CD4-positive, alpha-beta memory T cell (primary cell): ENCODE measurements at regions of chr5 and their contacts with region 1.

Region 1: GRCh38 chr5:12920527-12920926 is 1016.3 kb upstream of the CTNND2 start:
- DNase-seq: no peak
- H3K4me3 ChIP-seq: no peak overlapping the region
- H3K4me3 Mint-ChIP-seq: no peak overlapping the region
- H3K27ac ChIP-seq: no peak overlapping the region
- H3K27ac Mint-ChIP-seq: no peak overlapping the region
- H3K4me1 ChIP-seq: no peaks in the 10 kb centered on the region
- H3K4me1 Mint-ChIP-seq: no peaks in the 10 kb centered on the region
- H3K27me3 ChIP-seq: no peaks in the 10 kb centered on the region
- H3K27me3 Mint-ChIP-seq: no peaks in the 10 kb centered on the region

Region 2: DNA sequence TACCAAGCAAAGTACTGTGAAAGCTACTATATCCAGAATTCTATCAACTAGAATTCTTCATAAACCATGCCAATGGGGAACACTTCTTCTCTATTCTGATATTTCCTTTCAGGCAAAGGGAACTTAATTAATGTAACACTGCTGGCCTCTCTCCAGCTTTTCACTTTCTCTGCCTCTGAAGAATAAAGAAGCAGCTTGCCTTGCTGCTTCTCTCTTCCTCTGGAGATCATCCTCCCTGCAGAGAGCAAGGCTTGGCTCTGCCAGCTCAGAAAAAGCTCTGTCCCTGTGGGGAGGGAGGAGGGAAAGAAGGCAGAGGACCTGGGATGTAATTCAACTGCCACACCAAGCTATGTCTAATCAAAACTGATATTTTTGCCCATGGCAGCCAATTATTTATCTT is 1022.7 kb before region 1 on chr5:
- CTCF ChIA-PET with region 1: no interaction called
- POLR2A ChIA-PET with region 1: no interaction called
- intact Hi-C with region 1: no loop called
- DNase-seq: no peak
- H3K4me3 ChIP-seq: no peak overlapping the region
- H3K4me3 Mint-ChIP-seq: no peak overlapping the region
- H3K27ac ChIP-seq: no peak overlapping the region
- H3K27ac Mint-ChIP-seq: no peak overlapping the region
- H3K4me1 ChIP-seq: no peaks in the 10 kb centered on the region
- H3K4me1 Mint-ChIP-seq: peaks cover 0 to under 1% (median under 1%) of the 10 kb centered on the region in 4 donors
- H3K27me3 ChIP-seq: no peaks in the 10 kb centered on the region
- H3K27me3 Mint-ChIP-seq: peaks cover 7 to 12% of the 10 kb centered on the region in 2 donors

Region 3: GRCh38 chr5:12488161-12488560 is 432.4 kb before region 1 on chr5:
- CTCF ChIA-PET with region 1: no interaction called
- POLR2A ChIA-PET with region 1: no interaction called
- intact Hi-C with region 1: no loop called
- DNase-seq: no peak
- H3K4me3 ChIP-seq: no peak overlapping the region
- H3K4me3 Mint-ChIP-seq: no peak overlapping the region
- H3K27ac ChIP-seq: no peak overlapping the region
- H3K27ac Mint-ChIP-seq: no peak overlapping the region
- H3K4me1 ChIP-seq: no peaks in the 10 kb centered on the region
- H3K4me1 Mint-ChIP-seq: no peaks in the 10 kb centered on the region
- H3K27me3 ChIP-seq: no peaks in the 10 kb centered on the region
- H3K27me3 Mint-ChIP-seq: no peaks in the 10 kb centered on the region

Region 4: GRCh38 chr5:12959713-12960112 is 39.2 kb after region 1 on chr5:
- CTCF ChIA-PET with region 1: no interaction called
- POLR2A ChIA-PET with region 1: no interaction called
- intact Hi-C with region 1: loop called (anchors 1 kb)
- DNase-seq: no peak
- H3K4me3 ChIP-seq: no peak overlapping the region
- H3K4me3 Mint-ChIP-seq: no peak overlapping the region
- H3K27ac ChIP-seq: no peak overlapping the region
- H3K27ac Mint-ChIP-seq: no peak overlapping the region
- H3K4me1 ChIP-seq: no peaks in the 10 kb centered on the region
- H3K4me1 Mint-ChIP-seq: no peaks in the 10 kb centered on the region
- H3K27me3 ChIP-seq: no peaks in the 10 kb centered on the region
- H3K27me3 Mint-ChIP-seq: no peaks in the 10 kb centered on the region

Region 5: DNA sequence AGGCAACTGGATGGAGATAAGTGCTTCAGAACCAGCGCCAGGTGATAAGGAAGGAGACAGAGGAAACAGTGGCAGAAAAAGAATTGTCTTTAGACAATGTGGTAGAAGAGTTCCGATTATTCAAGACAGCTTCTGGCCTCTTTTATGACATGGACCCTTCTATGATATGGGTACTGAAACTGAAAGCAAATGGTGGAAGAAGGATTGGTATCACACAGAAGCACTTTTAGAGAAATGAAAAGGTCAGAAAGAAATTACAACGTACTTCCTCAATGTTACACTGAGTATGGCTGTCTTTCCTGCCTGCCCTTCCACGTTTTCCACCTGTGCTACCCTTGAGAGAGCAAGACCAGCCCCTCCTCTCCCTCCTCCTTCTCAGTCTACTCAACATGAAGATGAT is 64.6 kb after region 1 on chr5:
- CTCF ChIA-PET with region 1: no interaction called
- POLR2A ChIA-PET with region 1: no interaction called
- intact Hi-C with region 1: no loop called
- DNase-seq: no peak
- H3K4me3 ChIP-seq: no peak overlapping the region
- H3K4me3 Mint-ChIP-seq: no peak overlapping the region
- H3K27ac ChIP-seq: no peak overlapping the region
- H3K27ac Mint-ChIP-seq: no peak overlapping the region
- H3K4me1 ChIP-seq: no peaks in the 10 kb centered on the region
- H3K4me1 Mint-ChIP-seq: no peaks in the 10 kb centered on the region
- H3K27me3 ChIP-seq: no peaks in the 10 kb centered on the region
- H3K27me3 Mint-ChIP-seq: no peaks in the 10 kb centered on the region